ENCODE measurements at regions of chr2 and their contacts with region 1.

Region 1: GRCh38 chr2:193895226-193895625 is 1700.5 kb upstream of the TMEFF2 start:
- DNase-seq: no peak
- H3K4me3 ChIP-seq: no peak overlapping the region
- H3K27ac ChIP-seq: no peak overlapping the region
- H3K4me1 ChIP-seq: no peaks in the 10 kb centered on the region
- H3K27me3 ChIP-seq: no peaks in the 10 kb centered on the region
- CTCF ChIP-seq: no peak

Region 2: DNA sequence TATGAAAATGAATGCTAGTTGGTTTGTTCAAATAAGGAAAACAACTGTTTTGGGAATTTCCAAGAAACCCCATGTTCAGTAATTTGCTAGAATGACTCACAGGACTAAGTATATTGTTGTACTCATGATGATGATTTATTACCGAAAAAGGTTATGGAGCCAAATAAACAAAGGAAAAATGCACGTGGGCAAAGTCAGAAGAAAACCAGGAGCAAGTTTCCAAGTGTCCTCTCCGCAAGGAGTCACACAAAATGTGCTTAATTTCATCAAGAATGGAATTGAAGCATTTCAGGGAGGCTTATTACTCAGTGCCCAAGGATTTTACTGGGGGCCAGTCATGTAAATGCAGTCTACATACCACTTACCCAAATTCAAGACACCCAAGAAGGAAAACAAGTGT is 48.1 kb before region 1 on chr2:
- CTCF ChIA-PET with region 1: no interaction called
- POLR2A ChIA-PET with region 1: interaction called, 19 read pairs
- intact Hi-C with region 1: no loop called
- DNase-seq: no peak
- H3K4me3 ChIP-seq: no peak overlapping the region
- H3K27ac ChIP-seq: no peak overlapping the region
- H3K4me1 ChIP-seq: no peaks in the 10 kb centered on the region
- H3K27me3 ChIP-seq: no peaks in the 10 kb centered on the region
- CTCF ChIP-seq: no peak

Region 3: DNA sequence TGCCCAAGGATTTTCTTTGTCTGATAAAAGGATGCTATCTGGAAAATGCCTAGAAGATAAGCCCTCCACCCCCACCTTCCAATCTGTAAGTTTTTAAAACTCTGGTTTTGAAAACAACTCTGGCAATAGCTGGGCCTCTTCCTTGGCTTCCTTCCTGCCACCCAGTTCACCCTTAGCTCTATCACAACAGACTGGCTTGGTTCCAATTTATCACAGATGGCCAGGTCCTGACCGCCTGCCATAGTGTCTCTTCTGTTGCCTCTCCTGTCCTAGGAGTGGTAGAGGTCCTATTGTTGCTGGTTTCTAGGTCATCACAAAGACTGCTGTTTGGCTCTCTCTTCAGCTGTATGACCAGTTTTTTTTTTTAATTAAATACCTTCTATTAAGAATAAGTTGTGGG is 33.9 kb after region 1 on chr2:
- CTCF ChIA-PET with region 1: no interaction called
- POLR2A ChIA-PET with region 1: no interaction called
- intact Hi-C with region 1: no loop called
- DNase-seq: no peak
- H3K4me3 ChIP-seq: no peak overlapping the region
- H3K27ac ChIP-seq: no peak overlapping the region
- H3K4me1 ChIP-seq: no peaks in the 10 kb centered on the region
- H3K27me3 ChIP-seq: no peaks in the 10 kb centered on the region
- CTCF ChIP-seq: no peak